Activated CD4-positive, alpha-beta T cell treated with anti-CD3 and anti-CD28 coated beads, Interleukin-2, amount 10 ng/mL, durations not matched to agents 7 days and 5 days (primary cell): ENCODE measurements at regions of chr5 and their contacts with region 1.

Region 1: DNA sequence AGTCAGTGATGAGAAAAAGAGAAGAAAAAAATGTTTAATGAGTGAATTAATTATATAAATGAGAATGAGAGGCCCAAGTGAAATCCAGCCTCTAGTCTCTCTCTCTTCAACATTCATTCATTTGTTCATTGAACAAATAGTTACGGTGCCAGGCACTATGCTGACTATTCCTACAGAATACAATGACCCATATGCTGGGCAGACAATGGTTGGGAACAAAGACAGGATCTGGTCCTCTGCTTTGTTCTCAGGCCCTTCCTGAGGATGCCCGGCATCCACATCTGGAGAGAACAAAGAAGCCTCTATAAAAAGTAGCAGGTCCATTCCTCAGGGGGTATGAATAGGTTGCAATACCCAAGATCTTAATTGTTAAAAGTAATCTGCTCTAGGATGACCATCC is 6.9 kb downstream of the ADAM19 start:
- DNase-seq: no peak
- H3K4me3 Mint-ChIP-seq: peak overlapping the region; percentile 23
- H3K27ac Mint-ChIP-seq: no peak overlapping the region
- H3K4me1 Mint-ChIP-seq: peaks cover 80% of the 10 kb centered on the region
- H3K27me3 Mint-ChIP-seq: no peaks in the 10 kb centered on the region

Region 2: GRCh38 chr5:157549954-157550549 is 18.7 kb before region 1 on chr5:
- CTCF ChIA-PET with region 1: interaction called, 10 read pairs
- POLR2A ChIA-PET with region 1: no interaction called
- DNase-seq: no peak
- H3K4me3 Mint-ChIP-seq: peak overlapping the region; percentile 18
- H3K27ac Mint-ChIP-seq: peak overlapping the region; percentile 85
- H3K4me1 Mint-ChIP-seq: peaks cover 87% of the 10 kb centered on the region
- H3K27me3 Mint-ChIP-seq: no peaks in the 10 kb centered on the region

Region 3: DNA sequence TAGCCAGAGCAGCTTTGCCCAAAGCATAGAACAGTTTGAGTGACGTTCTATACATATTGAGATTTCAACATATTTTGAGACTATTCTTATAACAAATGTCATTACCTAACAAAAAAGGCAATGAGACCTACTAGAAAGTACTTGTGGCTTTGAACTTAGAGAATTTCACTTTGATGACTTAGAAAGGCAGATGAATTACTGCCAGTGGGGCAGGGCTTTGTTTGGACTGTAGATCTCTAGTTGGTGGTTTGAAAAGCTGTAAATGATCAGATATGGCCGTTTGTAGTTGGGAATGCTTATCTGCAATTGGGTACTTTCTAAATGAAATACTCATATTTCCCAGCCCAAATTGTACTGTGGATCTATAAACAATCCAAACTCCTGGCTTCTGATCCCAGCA is 55.4 kb after region 1 on chr5:
- CTCF ChIA-PET with region 1: no interaction called
- POLR2A ChIA-PET with region 1: no interaction called
- DNase-seq: no peak
- H3K4me3 Mint-ChIP-seq: no peak overlapping the region
- H3K27ac Mint-ChIP-seq: no peak overlapping the region
- H3K4me1 Mint-ChIP-seq: peaks cover 8% of the 10 kb centered on the region
- H3K27me3 Mint-ChIP-seq: peaks cover 11% of the 10 kb centered on the region

Region 4: GRCh38 chr5:157670662-157671591 is 102.2 kb after region 1 on chr5 and contains the start of gene C5orf52:
- CTCF ChIA-PET with region 1: no interaction called
- POLR2A ChIA-PET with region 1: no interaction called
- DNase-seq: peak; percentile 13
- H3K4me3 Mint-ChIP-seq: peak within 1 kb of the TSS; percentile 84
- H3K27ac Mint-ChIP-seq: peak within 1 kb of the TSS; percentile 88
- H3K4me1 Mint-ChIP-seq: peaks cover 32% of the 10 kb centered on the region
- H3K27me3 Mint-ChIP-seq: peaks cover 29% of the 10 kb centered on the region
- total RNA-seq, gene C5orf52: not detected